ENCODE measurements at regions of chr18 and their contacts with region 1.

Region 1: GRCh38 chr18:38427232-38427631 is 861.6 kb upstream of the CELF4 start:
- DNase-seq: no peak
- H3K4me3 ChIP-seq: no peak overlapping the region
- H3K27ac ChIP-seq: no peak overlapping the region
- H3K4me1 ChIP-seq: no peaks in the 10 kb centered on the region
- H3K27me3 ChIP-seq: no peaks in the 10 kb centered on the region
- CTCF ChIP-seq: peak in 1 of 2 donors; percentile 22

Region 2: DNA sequence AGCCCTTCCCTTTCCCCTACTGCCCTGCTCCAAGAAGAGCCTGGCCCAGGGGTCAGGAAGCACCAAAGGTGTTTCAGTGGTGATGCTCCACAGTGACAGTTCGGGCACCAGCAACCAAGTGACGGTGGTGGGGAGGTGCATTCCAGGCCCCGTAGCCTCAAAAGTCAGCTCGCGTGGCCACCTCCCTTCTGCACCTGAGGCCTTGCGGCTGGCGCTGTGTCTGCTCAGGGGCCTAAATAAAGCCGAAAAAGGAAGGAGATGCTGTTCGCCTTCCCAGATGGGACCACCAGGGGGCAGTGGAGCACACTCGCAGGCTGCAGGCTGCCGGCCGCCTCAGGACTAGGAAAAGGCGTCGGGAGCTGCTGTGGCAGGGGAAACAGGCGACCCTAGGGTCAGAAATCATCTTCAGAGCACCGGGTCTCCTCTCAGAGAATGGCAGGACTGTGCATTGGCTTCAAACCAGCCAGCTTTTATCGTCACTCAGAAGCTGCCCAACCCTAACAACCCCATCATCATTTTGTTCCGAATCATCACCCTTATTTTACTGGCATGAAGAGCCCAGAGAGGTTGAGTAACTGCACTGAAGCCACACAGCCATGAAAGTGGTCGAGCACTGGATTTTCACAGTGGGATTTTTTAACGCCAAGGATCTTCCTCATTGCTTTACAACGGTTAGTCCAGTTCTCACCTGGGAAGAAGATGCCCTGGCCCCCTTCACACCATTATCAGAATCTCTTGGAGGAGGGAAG is 648.6 kb before region 1 on chr18:
- CTCF ChIA-PET with region 1: no interaction called
- dilution Hi-C with region 1: no loop called
- in situ Hi-C with region 1: no loop called
- intact Hi-C with region 1: loop called (anchors 10 kb)
- DNase-seq: peak; percentile 13
- H3K4me3 ChIP-seq: no peak overlapping the region
- H3K27ac ChIP-seq: no peak overlapping the region
- H3K4me1 ChIP-seq: no peaks in the 10 kb centered on the region
- H3K27me3 ChIP-seq: no peaks in the 10 kb centered on the region
- CTCF ChIP-seq: peak; percentile 53 to 74

Region 3: GRCh38 chr18:38368246-38368645 is 59.0 kb before region 1 on chr18:
- CTCF ChIA-PET with region 1: interaction called, 53 read pairs
- dilution Hi-C with region 1: no loop called
- in situ Hi-C with region 1: no loop called
- intact Hi-C with region 1: no loop called
- DNase-seq: peak; percentile 55
- H3K4me3 ChIP-seq: no peak overlapping the region
- H3K27ac ChIP-seq: no peak overlapping the region
- H3K4me1 ChIP-seq: no peaks in the 10 kb centered on the region
- H3K27me3 ChIP-seq: no peaks in the 10 kb centered on the region
- CTCF ChIP-seq: no peak

Measured in mammary epithelial cell (primary cell).